GM12878 (cell line): ENCODE measurements at regions of chr16 and their contacts with region 1.

Region 1: DNA sequence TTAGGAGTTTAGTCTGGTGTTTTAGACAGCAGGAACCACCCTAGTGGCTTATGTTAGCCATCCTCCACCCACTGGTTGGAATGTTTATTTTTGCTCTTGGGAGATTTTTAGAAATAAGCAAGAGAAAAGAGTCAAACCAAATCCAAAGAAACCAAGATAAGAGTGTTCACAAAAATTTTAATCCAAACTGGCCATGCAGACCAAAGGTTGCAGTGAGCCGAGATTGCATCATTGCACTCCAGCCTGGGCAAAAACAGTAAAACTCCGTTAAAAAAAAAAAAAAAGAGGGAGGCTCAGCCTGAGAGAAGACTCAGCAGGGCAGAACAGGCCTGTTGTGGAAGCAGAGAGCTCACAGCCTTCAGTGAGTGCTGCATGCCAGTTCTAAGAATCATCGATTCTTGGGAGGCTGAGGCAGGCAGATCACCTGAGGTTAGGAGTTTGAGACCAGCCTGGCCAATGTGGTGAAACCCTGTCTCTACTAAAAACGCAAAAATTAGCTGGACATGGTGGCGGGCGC is 12.2 kb upstream of the C16orf54 start:
- DNase-seq: no peak
- ATAC-seq: no peak
- H3K4me3 ChIP-seq: no peak overlapping the region
- H3K27ac ChIP-seq: no peak overlapping the region
- H3K4me1 ChIP-seq: peaks cover 17% of the 10 kb centered on the region
- H3K27me3 ChIP-seq: no peaks in the 10 kb centered on the region
- CTCF ChIP-seq: no peak
- EP300 ChIP-seq: no peak
- POLR2A ChIP-seq: no peak
- RAD21 ChIP-seq: no peak

Region 2: DNA sequence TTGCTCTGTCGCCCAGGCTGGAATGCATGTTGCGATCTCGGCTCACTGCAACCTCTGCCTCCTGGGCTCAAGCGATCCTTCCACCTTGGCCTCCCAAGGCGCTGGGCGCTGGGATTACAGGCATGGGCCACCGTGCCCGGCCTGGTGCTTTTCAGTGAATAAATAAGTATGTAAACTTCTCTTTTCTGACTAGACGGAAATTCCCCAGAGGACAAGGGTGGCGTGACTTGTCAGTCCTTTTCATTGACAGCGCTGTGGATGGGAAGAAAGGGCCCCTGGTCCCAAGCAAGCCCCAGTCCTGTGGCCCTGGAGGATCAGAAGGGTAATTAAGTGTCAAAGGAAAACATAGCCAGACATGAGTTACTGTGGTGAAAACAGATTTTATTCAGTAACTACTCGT is 104.5 kb before region 1 on chr16:
- CTCF ChIA-PET with region 1: no interaction called
- POLR2A ChIA-PET with region 1: no interaction called
- RAD21 ChIA-PET with region 1: no interaction called
- SMC1A ChIA-PET with region 1: no interaction called
- in situ Hi-C with region 1: no loop called
- intact Hi-C with region 1: no loop called
- DNase-seq: no peak
- ATAC-seq: peak; percentile 93
- H3K4me3 ChIP-seq: no peak overlapping the region
- H3K27ac ChIP-seq: peak overlapping the region; percentile 61
- H3K4me1 ChIP-seq: peaks cover 18% of the 10 kb centered on the region
- H3K27me3 ChIP-seq: no peaks in the 10 kb centered on the region
- CTCF ChIP-seq: no peak
- EP300 ChIP-seq: peak in 1 of 2 experiments; percentile 37; a peak in 2 of 4 replicates
- POLR2A ChIP-seq: no peak
- RAD21 ChIP-seq: no peak

Region 3: GRCh38 chr16:29667755-29668154 is 90.3 kb before region 1 on chr16:
- CTCF ChIA-PET with region 1: no interaction called
- POLR2A ChIA-PET with region 1: no interaction called
- RAD21 ChIA-PET with region 1: no interaction called
- SMC1A ChIA-PET with region 1: no interaction called
- in situ Hi-C with region 1: no loop called
- intact Hi-C with region 1: no loop called
- DNase-seq: no peak
- ATAC-seq: no peak
- H3K4me3 ChIP-seq: no peak overlapping the region
- H3K27ac ChIP-seq: no peak overlapping the region
- H3K4me1 ChIP-seq: peaks cover 5% of the 10 kb centered on the region
- H3K27me3 ChIP-seq: no peaks in the 10 kb centered on the region
- CTCF ChIP-seq: no peak
- EP300 ChIP-seq: no peak
- POLR2A ChIP-seq: peak; percentile 79
- RAD21 ChIP-seq: no peak

Region 4: GRCh38 chr16:29738514-29738913 is 19.5 kb before region 1 on chr16:
- CTCF ChIA-PET with region 1: interaction called, 7 read pairs
- POLR2A ChIA-PET with region 1: interaction called, 6 read pairs
- RAD21 ChIA-PET with region 1: interaction called, 17 read pairs
- SMC1A ChIA-PET with region 1: interaction called, 6 read pairs
- in situ Hi-C with region 1: no loop called
- intact Hi-C with region 1: no loop called
- DNase-seq: peak; percentile 76
- ATAC-seq: peak; percentile 93
- H3K4me3 ChIP-seq: no peak overlapping the region
- H3K27ac ChIP-seq: peak overlapping the region; percentile 47
- H3K4me1 ChIP-seq: peaks cover 17% of the 10 kb centered on the region
- H3K27me3 ChIP-seq: no peaks in the 10 kb centered on the region
- CTCF ChIP-seq: no peak
- EP300 ChIP-seq: no peak
- POLR2A ChIP-seq: no peak
- RAD21 ChIP-seq: no peak

Region 5: GRCh38 chr16:29745853-29746345 is 12.1 kb before region 1 on chr16 and contains the start of gene C16orf54:
- CTCF ChIA-PET with region 1: interaction called, 3 read pairs
- POLR2A ChIA-PET with region 1: interaction called, 11 read pairs
- RAD21 ChIA-PET with region 1: interaction called, 4 read pairs
- SMC1A ChIA-PET with region 1: interaction called, 4 read pairs
- in situ Hi-C with region 1: no loop called
- intact Hi-C with region 1: no loop called
- DNase-seq: peak; percentile 89
- ATAC-seq: peak; percentile 95
- H3K4me3 ChIP-seq: peak within 1 kb of the TSS; percentile 62
- H3K27ac ChIP-seq: peak within 1 kb of the TSS; percentile 90
- H3K4me1 ChIP-seq: peaks cover 39% of the 10 kb centered on the region
- H3K27me3 ChIP-seq: no peaks in the 10 kb centered on the region
- CTCF ChIP-seq: no peak
- EP300 ChIP-seq: peak; percentile 59 to 87; a peak in 1 of 4 replicates
- POLR2A ChIP-seq: peak; percentile 71; the same call in 1 of the 2 replicates
- RAD21 ChIP-seq: no peak
- polyA plus RNA-seq, gene C16orf54: 2.1 to 2.4 TPM

Region 6: DNA sequence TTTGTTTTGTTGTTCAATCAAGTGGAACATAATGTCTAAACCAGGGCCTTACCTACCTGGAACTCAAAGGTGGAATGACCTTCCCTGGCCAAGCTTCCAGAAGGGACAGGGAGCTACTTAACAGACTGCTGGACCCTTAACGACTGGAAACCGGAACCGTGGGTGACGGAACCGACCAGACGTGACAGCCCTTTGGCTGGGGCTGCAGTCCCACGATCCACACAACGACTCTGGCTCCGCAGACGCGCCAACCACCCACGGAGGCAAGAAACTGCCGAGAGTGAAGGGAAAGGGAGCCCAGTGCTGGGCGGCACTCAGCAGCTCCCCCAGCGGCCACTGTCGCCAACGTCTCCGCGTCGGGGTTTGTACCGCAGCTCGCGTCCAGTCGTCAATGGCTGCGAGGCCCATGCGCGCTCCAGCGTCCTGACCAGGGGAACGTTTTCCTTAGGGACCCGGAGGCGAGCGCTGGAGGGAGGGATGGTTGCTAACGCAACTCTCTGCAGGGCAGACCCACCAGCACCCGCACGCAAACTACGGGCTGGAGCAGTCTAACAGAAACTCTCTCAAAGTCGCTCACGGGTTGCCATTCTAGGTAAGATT is 27.0 kb after region 1 on chr16:
- CTCF ChIA-PET with region 1: interaction called, 7 read pairs
- POLR2A ChIA-PET with region 1: interaction called, 6 read pairs
- RAD21 ChIA-PET with region 1: interaction called, 7 read pairs
- SMC1A ChIA-PET with region 1: interaction called, 10 read pairs
- in situ Hi-C with region 1: no loop called
- intact Hi-C with region 1: no loop called
- DNase-seq: no peak
- ATAC-seq: peak; percentile 89
- H3K4me3 ChIP-seq: peak overlapping the region; percentile 15; the same call in 1 of the 2 replicates
- H3K27ac ChIP-seq: no peak overlapping the region
- H3K4me1 ChIP-seq: peaks cover 13% of the 10 kb centered on the region
- H3K27me3 ChIP-seq: no peaks in the 10 kb centered on the region
- CTCF ChIP-seq: peak; percentile 63 to 84 (median 82)
- EP300 ChIP-seq: no peak
- POLR2A ChIP-seq: 0 out of 2 replicates have a peak, but pooled peaks have one; percentile 36
- RAD21 ChIP-seq: peak; percentile 60

Region 7: DNA sequence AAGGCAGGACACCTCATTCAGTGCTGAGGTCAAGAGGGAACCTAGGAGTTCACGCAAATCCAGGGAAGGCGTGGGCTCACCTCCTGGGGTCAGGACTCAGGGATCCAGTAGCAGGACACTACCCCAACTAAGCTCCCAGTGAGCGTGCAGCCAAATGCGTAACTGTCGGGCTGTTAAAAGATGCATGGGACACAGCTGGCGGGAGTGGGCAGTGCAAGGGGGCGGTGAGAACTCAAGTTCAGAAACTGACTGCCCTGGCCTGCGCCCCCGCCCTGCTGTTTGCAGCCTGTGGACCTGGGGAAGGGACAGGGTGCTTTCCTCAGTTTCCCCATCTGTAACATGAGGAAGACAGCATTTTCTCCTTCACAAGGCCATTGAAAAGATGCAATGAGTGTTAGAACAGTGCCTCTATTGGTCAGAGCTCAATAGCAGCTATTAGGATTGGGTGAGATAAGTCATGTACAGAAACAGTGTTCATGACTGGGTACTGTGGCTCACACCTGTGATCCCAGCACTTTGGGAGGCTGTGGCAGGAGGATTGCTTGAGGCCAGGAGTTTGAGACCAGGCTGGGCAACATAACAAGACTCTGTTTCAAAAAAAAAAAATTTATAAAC is 84.8 kb after region 1 on chr16:
- CTCF ChIA-PET with region 1: no interaction called
- POLR2A ChIA-PET with region 1: no interaction called
- RAD21 ChIA-PET with region 1: no interaction called
- SMC1A ChIA-PET with region 1: no interaction called
- in situ Hi-C with region 1: no loop called
- intact Hi-C with region 1: no loop called
- DNase-seq: no peak
- ATAC-seq: peak; percentile 57; the same call in 2 of the 3 replicates
- H3K4me3 ChIP-seq: no peak overlapping the region
- H3K27ac ChIP-seq: no peak overlapping the region
- H3K4me1 ChIP-seq: no peaks in the 10 kb centered on the region
- H3K27me3 ChIP-seq: no peaks in the 10 kb centered on the region
- CTCF ChIP-seq: no peak
- EP300 ChIP-seq: no peak
- POLR2A ChIP-seq: no peak
- RAD21 ChIP-seq: no peak